Astrocyte of the cerebellum (primary cell): ENCODE measurements at regions of chr1 and their contacts with region 1.

Region 1: DNA sequence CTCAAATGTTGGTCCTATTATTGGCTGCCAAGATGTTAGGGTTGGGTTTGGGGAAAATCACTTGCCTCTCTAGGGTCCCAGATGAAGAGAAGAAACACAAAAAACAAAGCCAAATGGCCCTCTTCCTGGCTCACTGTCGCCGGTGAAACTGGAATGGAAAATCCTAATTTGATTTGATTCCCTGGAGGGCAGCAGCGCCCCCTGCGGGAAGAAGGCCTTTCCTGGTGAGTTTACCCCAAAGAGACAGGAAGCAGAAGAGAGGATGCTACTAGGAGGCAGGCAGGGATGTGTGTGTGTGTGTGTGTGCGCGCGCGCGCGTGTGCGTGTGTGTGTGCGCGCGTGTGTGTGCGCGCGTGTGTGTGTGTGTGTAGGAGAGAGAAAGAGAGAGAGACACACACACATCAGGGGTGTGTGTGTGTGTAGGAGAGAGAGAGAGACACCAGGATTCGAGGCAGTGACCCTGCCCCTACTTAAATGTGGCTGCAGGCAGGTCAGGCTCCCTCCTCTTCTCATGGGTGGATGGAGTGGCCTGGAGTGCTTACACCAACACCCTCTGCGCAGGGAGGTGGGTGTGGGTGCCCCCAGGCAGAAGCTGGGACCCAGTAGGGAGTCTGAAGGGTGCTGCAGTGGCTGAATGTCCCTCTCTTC is 3.1 kb upstream of the SELENON start:
- DNase-seq: peak; percentile 50
- H3K4me3 ChIP-seq: no peak overlapping the region
- CTCF ChIP-seq: peak; percentile 76

Region 2: GRCh38 chr1:25683701-25684100 is 113.2 kb before region 1 on chr1:
- in situ Hi-C with region 1: no loop called
- DNase-seq: peak; percentile 61
- H3K4me3 ChIP-seq: no peak overlapping the region
- CTCF ChIP-seq: no peak

Region 3: GRCh38 chr1:25700144-25700523 is 96.8 kb before region 1 on chr1:
- in situ Hi-C with region 1: no loop called
- DNase-seq: no peak
- H3K4me3 ChIP-seq: no peak overlapping the region
- CTCF ChIP-seq: no peak

Region 4: GRCh38 chr1:25727635-25728330 is 69.2 kb before region 1 on chr1:
- in situ Hi-C with region 1: no loop called
- DNase-seq: no peak
- H3K4me3 ChIP-seq: no peak overlapping the region
- CTCF ChIP-seq: no peak

Region 5: GRCh38 chr1:25754470-25755181 is 42.3 kb before region 1 on chr1:
- in situ Hi-C with region 1: loop called (anchors 5 kb)
- DNase-seq: no peak
- H3K4me3 ChIP-seq: no peak overlapping the region
- CTCF ChIP-seq: no peak

Region 6: GRCh38 chr1:25848531-25848930 is 51.6 kb after region 1 on chr1:
- in situ Hi-C with region 1: no loop called
- DNase-seq: no peak
- H3K4me3 ChIP-seq: no peak overlapping the region
- CTCF ChIP-seq: no peak